AG04450 (cell line): ENCODE measurements at regions of chr13 and their contacts with region 1.

Region 1: DNA sequence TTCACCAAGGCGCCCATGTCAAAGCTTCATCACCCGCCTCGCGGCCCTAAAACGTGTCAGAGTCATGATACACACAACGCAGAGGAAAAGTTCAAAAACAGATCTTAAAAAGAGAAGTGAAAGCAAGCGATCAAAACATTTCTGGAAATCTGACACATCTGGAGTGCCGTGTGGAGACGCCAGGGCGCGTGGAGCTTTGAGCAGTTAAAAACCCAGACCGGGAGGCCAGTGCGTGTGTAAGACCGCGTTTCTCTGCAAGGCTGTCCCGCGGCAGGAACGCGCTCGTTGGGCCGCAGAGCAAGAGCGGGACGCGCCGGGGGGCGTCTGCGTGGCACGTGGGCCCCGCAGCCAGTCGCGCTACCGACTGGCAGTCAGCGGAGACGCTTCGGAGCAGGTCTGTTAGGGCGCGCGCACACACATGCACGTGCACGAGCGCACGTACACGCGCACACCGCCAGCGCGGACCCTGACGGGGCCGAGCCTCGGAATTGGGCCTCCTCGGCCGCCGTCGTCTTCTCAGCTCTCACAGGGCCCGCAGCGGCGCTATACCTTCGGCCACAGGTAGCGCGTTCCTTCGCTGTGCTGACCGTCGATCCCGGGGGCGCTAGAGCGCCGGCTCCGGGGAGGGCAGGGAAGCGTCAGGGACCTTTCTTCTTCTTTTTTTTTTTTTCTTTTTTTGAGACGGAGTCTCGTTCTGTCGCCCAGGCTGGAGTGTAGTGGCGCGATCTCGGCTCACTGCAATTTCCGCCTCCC is 35.8 kb downstream of the RNF6 start:
- DNase-seq: peak; percentile 77
- H3K4me3 ChIP-seq: peak overlapping the region; percentile 73
- H3K27ac ChIP-seq: peak overlapping the region; percentile 57
- H3K27me3 ChIP-seq: no peaks in the 10 kb centered on the region
- CTCF ChIP-seq: peak; percentile 38

Region 2: DNA sequence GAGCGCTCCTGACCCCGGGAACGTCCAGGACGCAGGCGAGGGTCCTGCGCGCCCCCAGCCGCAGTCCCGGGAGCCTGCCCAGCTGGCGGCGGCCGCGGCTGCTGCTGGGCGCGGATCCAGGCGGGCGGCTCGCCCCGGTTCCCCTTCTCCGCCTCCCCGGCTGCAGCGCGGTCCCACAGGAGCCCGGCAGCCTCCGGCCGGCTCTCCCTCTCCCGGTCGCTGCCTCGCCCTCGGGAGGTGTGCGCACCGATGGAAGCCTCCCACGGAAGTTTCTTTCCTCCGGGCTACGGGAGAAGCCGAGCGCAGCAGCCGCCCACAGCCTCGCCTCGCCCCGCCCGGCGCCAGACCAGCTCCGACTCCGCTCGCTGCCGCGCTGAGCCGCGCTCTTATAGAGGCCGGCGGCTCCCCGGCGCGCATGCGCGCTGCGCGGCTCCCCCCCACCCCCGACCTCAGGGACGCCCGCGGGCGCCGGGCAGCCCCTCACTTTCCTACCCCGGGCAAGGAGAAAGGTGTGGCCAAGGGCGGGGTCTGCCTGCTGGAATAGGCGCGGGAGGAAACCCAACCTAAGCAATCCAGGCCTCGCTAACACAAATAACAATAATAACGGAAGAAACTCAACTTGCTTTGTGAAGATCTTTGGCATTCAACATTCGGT is 134.5 kb before region 1 on chr13 and contains the start of gene SHISA2:
- CTCF ChIA-PET with region 1: no interaction called
- POLR2A ChIA-PET with region 1: no interaction called
- DNase-seq: no peak
- H3K4me3 ChIP-seq: peak within 1 kb of the TSS; percentile 45
- H3K27ac ChIP-seq: no peak within 1 kb of the TSS
- H3K27me3 ChIP-seq: peaks cover 35% of the 10 kb centered on the region
- CTCF ChIP-seq: no peak
- polyA plus RNA-seq, gene SHISA2: 0.02 TPM in 1 of 2 replicates, not detected in the other

Region 3: DNA sequence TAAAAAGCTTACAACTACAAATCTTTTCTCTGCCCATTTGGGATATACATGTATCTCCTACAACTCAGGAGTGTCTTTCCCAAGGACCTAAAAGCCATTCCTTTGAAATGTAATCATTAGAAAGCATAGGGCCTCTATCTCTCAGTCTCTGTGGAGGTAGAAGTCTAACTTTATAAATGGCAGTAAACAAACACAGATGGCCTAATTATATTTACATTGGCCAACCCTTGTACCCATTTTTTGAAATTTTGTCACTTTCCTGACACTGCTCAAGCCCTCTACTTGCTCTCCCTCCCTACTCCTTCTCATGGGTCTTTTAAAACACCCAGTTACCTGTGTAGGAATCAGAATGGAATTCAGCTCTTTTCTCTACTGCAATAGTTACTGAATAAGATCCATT is 11.0 kb after region 1 on chr13:
- CTCF ChIA-PET with region 1: interaction called, 27 read pairs
- POLR2A ChIA-PET with region 1: no interaction called
- DNase-seq: no peak
- H3K4me3 ChIP-seq: no peak overlapping the region
- H3K27ac ChIP-seq: no peak overlapping the region
- H3K27me3 ChIP-seq: no peaks in the 10 kb centered on the region
- CTCF ChIP-seq: no peak

Region 4: DNA sequence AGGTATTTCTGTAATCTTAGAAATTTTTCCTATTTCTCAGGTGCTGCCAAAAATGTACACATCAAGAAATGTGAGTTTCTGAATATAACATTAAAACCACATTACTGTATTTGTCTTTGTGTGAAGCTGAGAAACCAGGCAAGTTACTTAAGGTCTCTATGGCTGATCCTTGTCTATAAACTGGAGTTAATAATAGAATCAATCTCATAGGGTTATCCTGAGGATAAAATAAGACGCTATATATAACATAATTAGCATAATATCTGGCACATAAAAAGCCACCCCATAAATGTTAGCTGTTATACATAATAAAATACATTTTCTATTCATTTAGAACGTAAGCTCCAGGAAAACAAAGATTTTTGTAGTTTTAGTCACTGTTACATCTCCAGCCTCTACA is 29.7 kb after region 1 on chr13:
- CTCF ChIA-PET with region 1: interaction called, 27 read pairs
- POLR2A ChIA-PET with region 1: no interaction called
- DNase-seq: no peak
- H3K4me3 ChIP-seq: no peak overlapping the region
- H3K27ac ChIP-seq: no peak overlapping the region
- H3K27me3 ChIP-seq: no peaks in the 10 kb centered on the region
- CTCF ChIP-seq: no peak

Region 5: GRCh38 chr13:26390203-26390602 is 203.9 kb after region 1 on chr13:
- CTCF ChIA-PET with region 1: interaction called, 13 read pairs
- POLR2A ChIA-PET with region 1: no interaction called
- DNase-seq: no peak
- H3K4me3 ChIP-seq: no peak overlapping the region
- H3K27ac ChIP-seq: no peak overlapping the region
- H3K27me3 ChIP-seq: no peaks in the 10 kb centered on the region
- CTCF ChIP-seq: no peak

Region 6: DNA sequence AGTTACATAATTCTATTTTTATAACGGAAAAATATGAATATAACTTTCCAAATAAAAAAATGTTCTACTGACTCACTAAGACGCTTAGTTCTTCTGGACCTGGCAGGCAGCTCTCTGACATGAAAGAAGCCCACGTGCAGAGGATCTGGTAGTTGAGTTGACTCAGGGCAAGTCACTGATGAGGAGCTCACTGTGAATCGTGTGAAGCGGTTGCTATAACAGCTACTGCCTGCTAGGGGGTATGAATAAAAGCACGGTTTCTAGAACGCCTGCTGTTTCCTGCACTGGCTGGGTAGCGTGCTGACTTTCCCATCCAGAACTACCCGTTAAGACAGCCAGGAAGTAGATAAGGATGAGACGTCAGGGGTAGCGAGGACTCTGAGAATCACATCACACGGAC is 316.5 kb after region 1 on chr13:
- CTCF ChIA-PET with region 1: interaction called, 237 read pairs
- POLR2A ChIA-PET with region 1: interaction called, 8 read pairs
- DNase-seq: peak; percentile 24
- H3K4me3 ChIP-seq: no peak overlapping the region
- H3K27ac ChIP-seq: no peak overlapping the region
- H3K27me3 ChIP-seq: no peaks in the 10 kb centered on the region
- CTCF ChIP-seq: peak; percentile 44

Region 7: GRCh38 chr13:26721251-26722121 is 535.2 kb after region 1 on chr13:
- CTCF ChIA-PET with region 1: interaction called, 19 read pairs
- POLR2A ChIA-PET with region 1: no interaction called
- DNase-seq: no peak
- H3K4me3 ChIP-seq: no peak overlapping the region
- H3K27ac ChIP-seq: no peak overlapping the region
- H3K27me3 ChIP-seq: no peaks in the 10 kb centered on the region
- CTCF ChIP-seq: no peak